Transverse colon (tissue), 4 donors: ENCODE measurements at regions of chr18 and their contacts with region 1.

Region 1: GRCh38 chr18:65606551-65607130 is 144.2 kb upstream of the CDH7 start:
- DNase-seq: no peak
- H3K4me3 ChIP-seq: no peak overlapping the region
- H3K27ac ChIP-seq: no peak overlapping the region
- H3K4me1 ChIP-seq: no peaks in the 10 kb centered on the region
- H3K27me3 ChIP-seq: no peaks in the 10 kb centered on the region
- CTCF ChIP-seq: no peak
- EP300 ChIP-seq: no peak
- POLR2A ChIP-seq: no peak

Region 2: DNA sequence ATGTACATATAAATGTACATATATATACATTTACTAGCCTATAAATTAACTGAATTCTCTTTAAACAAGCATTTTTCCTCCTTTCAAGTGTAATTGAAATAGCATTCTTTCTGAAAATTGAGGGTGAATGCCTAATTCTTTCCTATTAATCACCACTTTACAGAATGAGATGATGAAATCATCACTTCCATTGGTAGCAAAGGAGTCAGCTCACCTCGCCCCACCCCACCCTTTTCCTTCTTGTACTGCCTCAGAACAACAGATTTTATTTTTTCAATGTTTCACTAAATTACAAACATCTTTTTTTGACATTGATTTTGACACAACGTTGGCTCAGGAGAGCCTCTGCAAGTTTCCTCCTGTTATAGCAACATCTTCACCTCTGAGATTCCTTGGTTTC is 37.8 kb before region 1 on chr18:
- in situ Hi-C with region 1: no loop called
- intact Hi-C with region 1: loop called (anchors 1 kb)
- DNase-seq: no peak
- H3K4me3 ChIP-seq: no peak overlapping the region
- H3K27ac ChIP-seq: no peak overlapping the region
- H3K4me1 ChIP-seq: no peaks in the 10 kb centered on the region
- H3K27me3 ChIP-seq: no peaks in the 10 kb centered on the region
- CTCF ChIP-seq: no peak
- EP300 ChIP-seq: no peak
- POLR2A ChIP-seq: no peak

Region 3: GRCh38 chr18:65706646-65707045 is 100.0 kb after region 1 on chr18:
- in situ Hi-C with region 1: no loop called
- intact Hi-C with region 1: no loop called
- DNase-seq: no peak
- H3K4me3 ChIP-seq: no peak overlapping the region
- H3K27ac ChIP-seq: no peak overlapping the region
- H3K4me1 ChIP-seq: no peaks in the 10 kb centered on the region
- H3K27me3 ChIP-seq: no peaks in the 10 kb centered on the region
- CTCF ChIP-seq: no peak
- EP300 ChIP-seq: no peak
- POLR2A ChIP-seq: no peak